MCF 10A (cell line): ENCODE measurements at regions of chr10 and their contacts with region 1.

Region 1: GRCh38 chr10:127919418-127920271 is 12.7 kb downstream of the PTPRE start:
- DNase-seq: peak; percentile 54
- H3K4me3 Mint-ChIP-seq: no peak overlapping the region
- H3K27ac Mint-ChIP-seq: no peak overlapping the region
- H3K4me1 Mint-ChIP-seq: peaks cover 26% of the 10 kb centered on the region
- H3K27me3 Mint-ChIP-seq: no peaks in the 10 kb centered on the region
- CTCF ChIP-seq: no peak

Region 2: DNA sequence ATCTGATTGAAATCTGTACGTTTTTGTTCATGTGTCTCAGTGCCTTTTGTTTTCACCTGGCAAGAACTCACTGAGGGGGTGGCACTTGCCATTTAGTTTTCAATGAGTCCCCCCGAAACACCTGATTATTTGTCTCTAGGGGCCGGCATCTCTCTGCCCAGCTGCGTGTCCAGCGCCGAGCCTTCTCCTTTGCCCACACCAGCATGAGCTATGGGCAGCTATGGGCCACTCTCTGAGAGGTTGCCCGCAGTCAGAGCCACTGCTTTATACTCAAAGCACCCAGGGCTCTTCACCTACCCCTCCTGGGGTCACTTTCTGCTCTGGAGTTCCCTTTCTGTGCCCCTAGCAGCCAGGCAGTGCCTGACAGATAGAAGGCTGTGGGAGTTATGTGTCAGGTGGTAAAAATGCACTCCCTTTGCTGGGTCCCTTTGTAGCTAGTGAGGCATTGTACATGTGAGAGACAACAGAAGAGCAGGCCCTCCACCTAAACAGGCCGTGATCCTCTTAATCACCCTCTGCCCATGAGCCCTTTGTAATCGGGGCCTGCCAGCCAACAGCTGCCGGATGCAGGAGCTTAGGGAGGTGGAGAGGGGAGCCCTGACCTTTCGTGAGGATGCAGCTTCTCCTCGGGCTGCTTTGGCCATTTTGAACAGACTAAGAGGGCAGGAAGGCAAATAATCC is 503.6 kb before region 1 on chr10:
- CTCF ChIA-PET with region 1: no interaction called
- POLR2A ChIA-PET with region 1: no interaction called
- intact Hi-C with region 1: no loop called
- DNase-seq: no peak
- H3K4me3 Mint-ChIP-seq: no peak overlapping the region
- H3K27ac Mint-ChIP-seq: no peak overlapping the region
- H3K4me1 Mint-ChIP-seq: no peaks in the 10 kb centered on the region
- H3K27me3 Mint-ChIP-seq: no peaks in the 10 kb centered on the region
- CTCF ChIP-seq: no peak

Region 3: GRCh38 chr10:127906548-127907377 is 12.9 kb before region 1 on chr10 and contains the start of gene PTPRE:
- CTCF ChIA-PET with region 1: interaction called, 55 read pairs
- POLR2A ChIA-PET with region 1: interaction called, 5 read pairs
- intact Hi-C with region 1: no loop called
- DNase-seq: peak; percentile 69
- H3K4me3 Mint-ChIP-seq: peak within 1 kb of the TSS; percentile 62
- H3K27ac Mint-ChIP-seq: no peak within 1 kb of the TSS
- H3K4me1 Mint-ChIP-seq: peaks cover 7% of the 10 kb centered on the region
- H3K27me3 Mint-ChIP-seq: no peaks in the 10 kb centered on the region
- CTCF ChIP-seq: peak; percentile 90
- total RNA-seq, gene PTPRE: 21.8 and 34.6 TPM in 2 replicates

Region 4: GRCh38 chr10:127990846-127991542 is 71.3 kb after region 1 on chr10:
- CTCF ChIA-PET with region 1: no interaction called
- POLR2A ChIA-PET with region 1: interaction called, 3 read pairs
- intact Hi-C with region 1: loop called (anchors 1 kb)
- DNase-seq: peak; percentile 79
- H3K4me3 Mint-ChIP-seq: peak overlapping the region; percentile 52
- H3K27ac Mint-ChIP-seq: peak overlapping the region; percentile 85
- H3K4me1 Mint-ChIP-seq: peaks cover 22% of the 10 kb centered on the region
- H3K27me3 Mint-ChIP-seq: no peaks in the 10 kb centered on the region
- CTCF ChIP-seq: no peak